A673 (cell line): ENCODE measurements at regions of chr1 and their contacts with region 1.

Region 1: GRCh38 chr1:19949016-19949415 is 25.6 kb upstream of the PLA2G2E start:
- DNase-seq: no peak
- H3K4me3 ChIP-seq: no peak overlapping the region
- H3K27ac ChIP-seq: no peak overlapping the region
- H3K4me1 ChIP-seq: no peaks in the 10 kb centered on the region
- H3K27me3 ChIP-seq: peaks cover 18% of the 10 kb centered on the region
- CTCF ChIP-seq: no peak

Region 2: DNA sequence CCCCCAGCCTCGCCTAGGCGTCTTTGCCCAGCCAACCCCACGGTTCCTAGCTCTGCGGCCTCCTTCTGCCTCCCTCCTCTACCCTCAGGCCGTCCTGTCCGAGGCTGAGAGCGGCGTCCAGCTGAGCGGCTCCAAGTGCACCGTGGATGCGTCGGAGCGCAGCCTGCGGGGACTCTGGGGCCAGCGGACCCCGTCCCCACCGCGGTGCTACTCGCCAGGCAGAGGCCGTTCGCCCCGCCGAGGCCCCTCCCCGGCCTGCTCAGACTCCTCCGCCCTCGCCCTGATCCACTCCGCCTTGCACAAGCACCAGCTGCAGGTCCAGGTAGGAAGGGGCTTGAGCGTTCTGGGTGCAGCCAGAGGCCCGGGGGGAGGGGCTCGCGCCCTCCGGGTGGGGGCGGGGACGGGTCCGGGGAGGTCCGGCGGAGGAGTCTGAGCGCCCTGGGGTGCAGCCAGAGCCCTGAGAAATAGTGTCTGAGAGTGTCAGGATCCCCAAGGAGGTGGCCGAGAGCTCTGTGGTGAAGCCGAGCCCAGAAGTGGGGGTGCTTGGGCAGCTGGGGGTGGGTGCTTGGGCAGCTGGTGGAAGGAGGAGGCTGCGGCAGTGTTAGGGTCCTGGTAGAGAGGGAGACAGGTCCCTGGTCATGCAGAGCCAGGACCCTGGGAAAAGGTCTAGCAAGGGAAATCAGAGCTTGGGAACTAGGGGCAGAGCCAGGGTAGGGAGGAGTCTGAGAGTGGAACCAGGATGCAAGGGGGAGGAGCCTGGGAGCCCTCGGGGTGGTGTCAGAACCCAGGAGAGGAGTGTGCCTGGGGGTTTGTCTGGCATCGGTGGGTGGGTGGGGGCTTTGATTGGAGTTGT is 1487.7 kb after region 1 on chr1:
- CTCF ChIA-PET with region 1: no interaction called
- POLR2A ChIA-PET with region 1: interaction called, 10 read pairs
- intact Hi-C with region 1: no loop called
- DNase-seq: peak; percentile 25
- H3K4me3 ChIP-seq: peak overlapping the region; percentile 40
- H3K27ac ChIP-seq: no peak overlapping the region
- H3K4me1 ChIP-seq: peaks cover 9% of the 10 kb centered on the region
- H3K27me3 ChIP-seq: no peaks in the 10 kb centered on the region
- CTCF ChIP-seq: no peak